Esophagus muscularis mucosa (tissue), 4 donors: ENCODE measurements at regions of chr4 and their contacts with region 1.

Region 1: DNA sequence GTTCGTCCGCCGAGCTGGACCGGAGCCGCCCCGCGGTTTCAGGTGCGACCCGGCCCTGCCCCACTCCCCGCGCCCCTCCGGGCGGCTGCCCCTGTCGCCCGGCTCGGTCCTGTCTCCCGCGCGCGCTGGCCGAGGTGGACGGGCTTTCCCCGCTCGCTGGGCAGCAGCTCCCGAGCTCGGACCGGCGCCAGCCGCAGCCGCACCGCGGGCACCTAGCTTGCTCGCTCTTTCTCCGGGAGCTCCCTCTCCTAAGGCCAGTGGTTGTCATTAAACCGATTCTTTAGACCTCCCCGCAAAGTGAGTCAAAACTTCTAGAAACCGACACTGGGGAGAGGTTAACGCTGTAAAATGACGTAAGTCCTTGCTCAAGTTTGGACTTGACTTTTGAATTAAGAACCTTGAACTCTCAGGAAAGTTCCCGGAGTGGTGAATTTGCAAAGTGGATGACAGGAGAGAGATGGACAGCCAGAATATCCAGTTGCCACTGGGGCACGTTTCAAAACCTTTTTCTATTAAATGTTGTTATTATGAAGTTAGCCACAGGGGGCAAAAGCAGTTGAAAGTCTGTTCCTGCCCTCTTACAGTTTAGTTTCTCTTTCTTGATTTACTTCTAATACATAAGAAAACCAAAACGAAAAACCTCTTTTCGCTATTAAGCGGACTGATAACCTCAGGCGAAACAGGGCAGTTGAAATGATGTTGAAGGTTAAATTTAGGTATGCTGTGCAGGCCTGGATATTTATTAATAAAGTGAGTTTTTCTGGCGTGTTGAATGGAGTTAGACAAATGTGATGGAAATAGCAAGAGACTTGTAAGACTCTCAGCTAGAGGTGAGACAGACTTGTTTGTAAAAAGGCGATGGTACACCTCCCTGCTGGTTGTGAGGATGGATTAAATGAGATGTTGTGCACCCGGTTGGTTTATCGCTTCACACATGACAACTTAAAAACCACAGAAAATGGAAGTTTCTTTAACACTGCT is 847 bp downstream of the PI4K2B start:
- DNase-seq: no peak
- H3K4me3 ChIP-seq: peak overlapping the region; percentile 81 to 100 (median 96)
- H3K27ac ChIP-seq: peak overlapping the region; percentile 92 to 99 (median 98)
- H3K4me1 ChIP-seq: peaks cover 8 to 17% (median 14%) of the 10 kb centered on the region in 4 donors
- H3K27me3 ChIP-seq: no peaks in the 10 kb centered on the region
- CTCF ChIP-seq: peak in 2 of 3 experiments; percentile 37 to 58
- EP300 ChIP-seq: no peak
- POLR2A ChIP-seq: no peak

Region 2: DNA sequence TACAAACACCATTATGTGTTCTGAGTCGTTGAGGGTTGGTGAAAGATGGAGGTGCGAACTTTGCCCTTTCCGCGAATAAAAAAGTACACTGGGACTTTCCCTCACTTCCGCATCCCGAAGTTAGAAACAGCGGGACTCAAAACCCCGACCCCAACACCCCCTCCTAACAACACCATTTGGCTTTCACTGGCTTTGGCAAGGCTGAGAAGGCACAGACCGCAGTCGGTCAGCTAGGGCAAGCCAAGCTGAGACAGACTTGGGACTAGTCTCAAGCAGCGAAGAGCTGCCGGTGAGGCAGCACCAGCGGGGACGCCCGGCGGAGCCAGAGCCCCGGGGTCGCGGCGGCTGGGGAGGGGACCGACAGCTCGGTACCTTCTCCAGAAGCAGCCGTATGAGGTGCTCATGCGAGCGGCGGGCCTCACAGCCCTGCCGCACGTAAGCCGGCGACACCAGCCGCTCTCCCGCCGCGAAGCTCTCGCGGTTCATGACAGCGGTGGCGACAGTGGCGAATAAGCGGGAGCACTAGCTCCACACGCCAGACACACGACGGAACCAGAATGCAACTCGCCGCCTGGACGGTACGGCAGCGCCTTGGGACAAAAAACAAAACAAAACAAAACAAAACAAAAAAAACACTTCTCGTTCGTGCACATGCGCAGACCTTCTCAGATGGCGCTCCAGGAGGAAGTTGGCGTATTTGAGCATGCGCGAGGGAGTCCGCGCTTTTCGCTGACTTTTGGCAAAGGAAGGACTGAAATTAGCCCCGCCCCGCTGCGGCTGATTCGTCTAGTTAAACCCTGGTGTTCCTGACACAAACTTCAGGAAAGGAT is 74.6 kb before region 1 on chr4 and contains the start of gene SEPSECS:
- intact Hi-C with region 1: loop called (anchors 5 kb)
- DNase-seq: peak; percentile 99
- H3K4me3 ChIP-seq: peak within 1 kb of the TSS; percentile 82 to 92 (median 87)
- H3K27ac ChIP-seq: peak within 1 kb of the TSS; percentile 96 to 97 (median 97)
- H3K4me1 ChIP-seq: peaks cover 14 to 24% (median 22%) of the 10 kb centered on the region in 4 donors
- H3K27me3 ChIP-seq: no peaks in the 10 kb centered on the region
- CTCF ChIP-seq: no peak
- EP300 ChIP-seq: no peak
- POLR2A ChIP-seq: no peak
- total RNA-seq, gene SEPSECS: 3.8 to 6.2 (median 4.0) TPM

Region 3: GRCh38 chr4:25578432-25578831 is 343.8 kb after region 1 on chr4:
- intact Hi-C with region 1: no loop called
- DNase-seq: no peak
- H3K4me3 ChIP-seq: no peak overlapping the region
- H3K27ac ChIP-seq: no peak overlapping the region
- H3K4me1 ChIP-seq: no peaks in the 10 kb centered on the region
- H3K27me3 ChIP-seq: no peaks in the 10 kb centered on the region
- CTCF ChIP-seq: no peak
- EP300 ChIP-seq: no peak
- POLR2A ChIP-seq: no peak